GM12878 (cell line): ENCODE measurements at regions of chr7 and their contacts with region 1.

Region 1: DNA sequence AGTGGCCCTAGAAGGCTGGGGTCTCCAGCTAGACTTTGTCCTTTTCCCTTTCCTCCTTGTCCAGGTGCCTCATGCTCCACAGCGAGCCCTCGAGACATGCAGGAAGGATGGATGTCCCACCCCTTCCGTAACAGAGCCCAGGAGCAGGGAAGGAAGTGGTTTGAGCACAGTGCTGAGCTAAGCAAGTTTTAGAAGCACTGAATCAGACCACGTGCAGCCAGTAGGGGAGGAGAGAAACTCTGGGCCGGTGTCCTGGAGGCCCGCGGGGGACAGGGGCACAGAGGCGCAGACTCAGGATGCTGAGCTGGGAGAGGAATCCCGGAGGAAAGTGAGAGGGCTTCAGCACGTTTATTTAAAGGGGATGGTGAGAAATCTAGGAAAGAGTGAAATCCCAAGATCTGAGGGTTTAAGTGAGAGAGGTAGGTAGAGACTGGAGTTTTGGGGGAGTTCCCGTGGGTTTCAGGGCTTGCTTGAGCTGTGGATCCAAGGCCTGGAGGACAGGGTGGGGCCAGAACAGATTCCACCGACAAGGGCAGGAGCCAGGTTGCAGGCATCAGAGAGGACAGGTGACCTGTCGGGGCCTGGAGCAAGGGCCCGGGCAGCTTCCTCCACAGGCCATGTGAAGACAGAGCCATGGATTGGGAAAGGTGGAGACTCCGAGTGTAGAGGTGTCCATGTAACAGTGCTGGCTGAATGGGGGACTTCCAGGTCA is 4.4 kb upstream of the IRF5 start:
- DNase-seq: peak; percentile 71
- ATAC-seq: peak; percentile 59
- H3K4me3 ChIP-seq: peak overlapping the region; percentile 50
- H3K27ac ChIP-seq: peak overlapping the region; percentile 96
- H3K4me1 ChIP-seq: peaks cover 44% of the 10 kb centered on the region
- H3K27me3 ChIP-seq: no peaks in the 10 kb centered on the region
- CTCF ChIP-seq: no peak
- EP300 ChIP-seq: no peak; a peak in 1 of 4 replicates
- POLR2A ChIP-seq: peak; percentile 73
- RAD21 ChIP-seq: no peak

Region 2: GRCh38 chr7:128909625-128910257 is 23.6 kb before region 1 on chr7:
- CTCF ChIA-PET with region 1: interaction called, 4 read pairs
- POLR2A ChIA-PET with region 1: interaction called, 10 read pairs
- RAD21 ChIA-PET with region 1: interaction called, 11 read pairs
- SMC1A ChIA-PET with region 1: interaction called, 11 read pairs
- in situ Hi-C with region 1: no loop called
- intact Hi-C with region 1: no loop called
- DNase-seq: no peak
- ATAC-seq: no peak
- H3K4me3 ChIP-seq: no peak overlapping the region
- H3K27ac ChIP-seq: no peak overlapping the region
- H3K4me1 ChIP-seq: peaks cover 14% of the 10 kb centered on the region
- H3K27me3 ChIP-seq: no peaks in the 10 kb centered on the region
- CTCF ChIP-seq: no peak
- EP300 ChIP-seq: no peak
- POLR2A ChIP-seq: no peak
- RAD21 ChIP-seq: no peak

Region 3: GRCh38 chr7:128954830-128955802 is 21.8 kb after region 1 on chr7:
- CTCF ChIA-PET with region 1: interaction called, 3 read pairs
- POLR2A ChIA-PET with region 1: interaction called, 9 read pairs
- RAD21 ChIA-PET with region 1: interaction called, 25 read pairs
- SMC1A ChIA-PET with region 1: interaction called, 8 read pairs
- in situ Hi-C with region 1: no loop called
- intact Hi-C with region 1: no loop called
- DNase-seq: no peak
- ATAC-seq: peak; percentile 87
- H3K4me3 ChIP-seq: peak overlapping the region; percentile 46; the same call in 1 of the 2 replicates
- H3K27ac ChIP-seq: peak overlapping the region; percentile 65
- H3K4me1 ChIP-seq: peaks cover 18% of the 10 kb centered on the region
- H3K27me3 ChIP-seq: no peaks in the 10 kb centered on the region
- CTCF ChIP-seq: no peak
- EP300 ChIP-seq: peak; percentile 74 to 79; a peak in 2 of 4 replicates
- POLR2A ChIP-seq: no peak
- RAD21 ChIP-seq: no peak